ENCODE measurements at regions of chr9 and their contacts with region 1.

Region 1: GRCh38 chr9:124861342-124862229 is at the starts of genes ARPC5L and RPL35:
- DNase-seq: peak; percentile 79 to 96
- H3K4me3 ChIP-seq: peak within 1 kb of the TSS; percentile 97
- H3K27ac ChIP-seq: peak within 1 kb of the TSS; percentile 93
- H3K4me1 ChIP-seq: peaks cover 44% of the 10 kb centered on the region
- H3K27me3 ChIP-seq: no peaks in the 10 kb centered on the region
- CTCF ChIP-seq: no peak; the same call in 1 of the 2 replicates
- total RNA-seq, gene ARPC5L: 71.0 and 84.4 TPM in 2 replicates
- total RNA-seq, gene RPL35: 2,125 and 2,313 TPM in 2 replicates

Region 2: DNA sequence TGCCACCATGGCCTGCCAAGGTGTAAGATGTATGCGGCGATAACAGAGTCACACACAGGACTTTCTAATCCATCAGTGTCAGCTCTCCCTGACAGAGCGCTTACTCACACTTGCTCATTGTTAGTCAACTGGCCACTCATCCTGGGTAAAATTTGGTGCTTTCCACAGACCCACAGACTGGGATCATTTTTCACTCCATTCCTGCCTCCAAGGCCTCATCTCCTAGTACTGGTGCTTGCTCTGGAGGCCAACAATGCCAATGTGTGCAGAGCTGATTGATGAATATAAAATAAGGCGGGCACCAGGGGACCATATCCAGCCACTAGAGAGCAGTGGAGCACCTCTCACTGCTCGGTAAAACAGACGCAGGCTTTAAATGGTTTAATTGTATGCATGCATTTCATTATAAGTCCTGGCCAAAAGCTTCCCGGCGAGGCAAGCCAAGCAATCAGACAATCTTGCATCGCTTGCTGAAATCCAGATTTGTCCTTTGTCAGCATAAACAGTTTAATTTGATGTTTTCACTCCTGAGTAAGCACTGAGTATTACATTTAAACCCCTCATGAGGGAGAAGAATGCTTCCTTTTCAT is 468.6 kb before region 1 on chr9:
- CTCF ChIA-PET with region 1: no interaction called
- POLR2A ChIA-PET with region 1: no interaction called
- intact Hi-C with region 1: no loop called
- DNase-seq: peak; percentile 87 to 99
- H3K4me3 ChIP-seq: peak overlapping the region; percentile 51; the same call in 1 of the 2 replicates
- H3K27ac ChIP-seq: peak overlapping the region; percentile 97
- H3K4me1 ChIP-seq: peaks cover 82% of the 10 kb centered on the region
- H3K27me3 ChIP-seq: no peaks in the 10 kb centered on the region
- CTCF ChIP-seq: peak; percentile 60; the same call in 1 of the 2 replicates

Region 3: DNA sequence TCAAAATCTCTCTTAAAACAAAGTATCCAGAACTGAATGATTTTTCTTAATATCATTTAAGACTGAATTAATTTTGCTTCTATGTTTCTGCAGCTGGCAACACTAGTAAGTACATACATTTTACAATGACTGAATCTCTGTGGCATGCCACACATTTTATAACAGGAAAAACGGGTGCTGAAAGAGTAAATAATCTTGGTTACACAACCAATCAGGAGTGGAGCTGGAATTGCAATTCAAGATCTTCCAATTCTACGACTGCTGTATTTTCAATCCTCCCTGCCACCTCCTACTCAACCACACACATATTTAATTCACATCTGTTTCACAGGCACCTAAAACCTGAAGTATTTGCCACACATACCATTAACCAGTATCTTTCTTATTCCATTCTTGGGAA is 301.7 kb before region 1 on chr9:
- CTCF ChIA-PET with region 1: no interaction called
- POLR2A ChIA-PET with region 1: no interaction called
- intact Hi-C with region 1: no loop called
- DNase-seq: peak; percentile 21 to 90
- H3K4me3 ChIP-seq: no peak overlapping the region
- H3K27ac ChIP-seq: no peak overlapping the region
- H3K4me1 ChIP-seq: peaks cover 17% of the 10 kb centered on the region
- H3K27me3 ChIP-seq: no peaks in the 10 kb centered on the region
- CTCF ChIP-seq: no peak

Region 4: GRCh38 chr9:124658165-124659017 is 203.2 kb before region 1 on chr9:
- CTCF ChIA-PET with region 1: no interaction called
- POLR2A ChIA-PET with region 1: interaction called, 13 read pairs
- intact Hi-C with region 1: loop called (anchors 5 kb)
- DNase-seq: peak; percentile 87 to 94
- H3K4me3 ChIP-seq: peak overlapping the region; percentile 70
- H3K27ac ChIP-seq: peak overlapping the region; percentile 94
- H3K4me1 ChIP-seq: peaks cover 41% of the 10 kb centered on the region
- H3K27me3 ChIP-seq: no peaks in the 10 kb centered on the region
- CTCF ChIP-seq: no peak

Region 5: GRCh38 chr9:124779362-124780059 is 82.1 kb before region 1 on chr9:
- CTCF ChIA-PET with region 1: interaction called, 159 read pairs
- POLR2A ChIA-PET with region 1: interaction called, 4 read pairs
- intact Hi-C with region 1: no loop called
- DNase-seq: peak; percentile 77 to 90
- H3K4me3 ChIP-seq: no peak overlapping the region
- H3K27ac ChIP-seq: no peak overlapping the region
- H3K4me1 ChIP-seq: peaks cover 18% of the 10 kb centered on the region
- H3K27me3 ChIP-seq: 0 out of 2 replicates have a peak, but pooled peaks cover 7% of the 10 kb centered on the region
- CTCF ChIP-seq: no peak

Region 6: GRCh38 chr9:124839612-124840299 is 21.8 kb before region 1 on chr9:
- CTCF ChIA-PET with region 1: no interaction called
- POLR2A ChIA-PET with region 1: no interaction called
- intact Hi-C with region 1: no loop called
- DNase-seq: no peak
- H3K4me3 ChIP-seq: no peak overlapping the region
- H3K27ac ChIP-seq: no peak overlapping the region
- H3K4me1 ChIP-seq: peaks cover 19% of the 10 kb centered on the region
- H3K27me3 ChIP-seq: no peaks in the 10 kb centered on the region
- CTCF ChIP-seq: peak; percentile 64

Region 7: DNA sequence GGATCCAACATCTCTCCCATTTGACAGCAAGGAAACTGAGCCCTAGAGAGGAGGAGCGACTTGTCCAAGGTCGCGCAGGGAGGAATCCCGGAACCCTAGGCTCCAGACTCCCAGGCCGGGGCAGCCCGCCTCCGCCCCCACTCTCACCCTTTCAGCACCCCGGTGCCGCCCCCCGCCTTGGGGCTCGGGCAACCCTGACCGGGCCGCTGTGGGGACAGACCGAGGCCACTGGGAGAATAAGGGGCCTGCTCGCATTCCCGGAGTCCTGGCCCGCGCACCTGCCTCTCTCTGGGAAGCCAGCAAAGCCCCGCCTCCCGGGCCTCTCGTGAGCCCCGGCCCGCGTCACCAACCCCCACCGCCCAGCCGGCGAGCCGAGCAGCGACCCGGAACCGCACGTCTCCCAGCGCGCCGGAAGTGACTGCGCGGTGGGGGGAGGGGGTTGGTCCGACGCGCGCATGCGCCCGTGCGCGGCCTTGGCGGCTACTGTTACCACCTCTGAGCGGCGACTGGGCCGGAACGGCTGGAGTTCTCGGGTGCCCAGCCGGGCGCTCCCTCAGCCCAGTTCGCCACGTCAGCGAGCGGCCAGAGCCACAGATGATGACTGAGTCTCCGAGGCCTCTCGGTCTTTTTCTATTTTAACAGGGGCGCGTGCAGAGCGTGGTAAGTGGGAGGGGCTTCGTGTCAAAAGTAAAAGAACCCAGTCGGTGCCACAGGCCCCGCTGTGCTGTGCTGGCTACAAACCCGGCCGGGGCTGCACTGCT is 79.3 kb after region 1 on chr9 and contains the start of gene GOLGA1:
- CTCF ChIA-PET with region 1: no interaction called
- POLR2A ChIA-PET with region 1: interaction called, 23 read pairs
- intact Hi-C with region 1: no loop called
- DNase-seq: peak; percentile 82 to 98
- H3K4me3 ChIP-seq: peak within 1 kb of the TSS; percentile 71
- H3K27ac ChIP-seq: peak within 1 kb of the TSS; percentile 83
- H3K4me1 ChIP-seq: peaks cover 19% of the 10 kb centered on the region
- H3K27me3 ChIP-seq: no peaks in the 10 kb centered on the region
- CTCF ChIP-seq: no peak
- total RNA-seq, gene GOLGA1: 23.0 and 26.2 TPM in 2 replicates

Region 8: GRCh38 chr9:125143375-125144090 is 281.9 kb after region 1 on chr9 and contains the start of gene SCAI:
- CTCF ChIA-PET with region 1: interaction called, 6 read pairs
- POLR2A ChIA-PET with region 1: no interaction called
- intact Hi-C with region 1: loop called (anchors 1 kb)
- DNase-seq: peak; percentile 96 to 100
- H3K4me3 ChIP-seq: peak within 1 kb of the TSS; percentile 57
- H3K27ac ChIP-seq: no peak within 1 kb of the TSS
- H3K4me1 ChIP-seq: peaks cover 5% of the 10 kb centered on the region; the same call in 1 of the 2 replicates
- H3K27me3 ChIP-seq: no peaks in the 10 kb centered on the region
- CTCF ChIP-seq: peak; percentile 98
- total RNA-seq, gene SCAI: 16.0 and 20.2 TPM in 2 replicates

Measured in PC-9 (cell line).